ENCODE measurements at regions of chr18 and their contacts with region 1.

Region 1: GRCh38 chr18:8794133-8794986 is 89.0 kb downstream of the MTCL1 start:
- DNase-seq: no peak

Region 2: GRCh38 chr18:8704361-8705279 is 89.7 kb before region 1 on chr18:
- intact Hi-C with region 1: loop called in 1 of 2 experiments (anchors 10 kb)
- DNase-seq: peak; percentile 95

Region 3: DNA sequence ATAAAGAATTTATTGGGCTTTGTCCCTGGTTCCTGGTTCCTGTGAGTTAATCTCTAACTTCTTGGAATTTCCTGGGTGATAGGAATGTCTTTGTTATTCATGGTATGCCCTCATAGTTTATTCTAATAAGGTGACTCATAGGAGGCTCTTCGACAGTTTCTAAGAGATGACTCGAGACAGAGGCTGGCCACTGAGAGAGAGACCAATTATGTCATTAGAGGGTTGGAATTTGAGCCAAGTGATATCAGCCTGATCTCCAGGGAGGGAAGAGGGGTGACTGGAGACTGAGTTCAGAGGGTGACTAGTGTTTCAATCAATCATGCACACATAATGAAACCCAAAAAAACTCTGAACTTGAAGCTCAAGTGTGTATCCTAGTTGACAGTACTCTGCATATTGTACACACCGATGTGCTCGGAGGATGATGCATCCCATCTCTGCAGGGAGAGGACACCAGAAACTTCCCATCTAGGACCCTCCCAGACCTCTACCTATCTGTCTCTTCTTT is 96.7 kb after region 1 on chr18:
- intact Hi-C with region 1: no loop called
- DNase-seq: no peak

Region 4: GRCh38 chr18:9048808-9049494 is 254.6 kb after region 1 on chr18:
- intact Hi-C with region 1: no loop called
- DNase-seq: no peak

Measured in posterior vena cava (tissue), 2 donors.